Naive thymus-derived CD4-positive, alpha-beta T cell (primary cell): ENCODE measurements at regions of chr1 and their contacts with region 1.

Region 1: DNA sequence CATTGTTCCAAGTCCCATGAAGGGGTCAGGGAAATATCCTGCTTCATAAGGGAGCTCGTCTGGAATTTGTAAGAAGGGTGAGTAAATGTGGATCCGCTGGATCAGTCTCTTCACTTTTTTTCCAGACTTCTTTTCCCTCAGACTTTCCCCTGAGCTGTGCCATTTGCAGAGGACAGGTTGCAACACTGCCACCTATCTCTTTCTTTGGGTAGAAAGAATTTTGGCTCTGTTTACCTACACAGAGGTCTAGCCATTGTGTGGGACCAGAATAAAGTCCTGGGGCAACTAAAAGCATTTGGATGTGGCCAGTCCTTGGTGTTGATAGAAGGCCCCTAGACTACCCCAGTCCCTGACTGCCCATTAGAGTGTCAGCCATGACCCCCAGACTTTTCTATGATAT is 1146.7 kb upstream of the PRMT6 start:
- DNase-seq: no peak
- ATAC-seq: no peak
- H3K4me3 ChIP-seq: no peak overlapping the region
- H3K4me3 Mint-ChIP-seq: no peak overlapping the region
- H3K27ac ChIP-seq: no peak overlapping the region
- H3K27ac Mint-ChIP-seq: no peak overlapping the region
- H3K4me1 ChIP-seq: no peaks in the 10 kb centered on the region
- H3K4me1 Mint-ChIP-seq: no peaks in the 10 kb centered on the region
- H3K27me3 ChIP-seq: no peaks in the 10 kb centered on the region
- H3K27me3 Mint-ChIP-seq: no peaks in the 10 kb centered on the region

Region 2: DNA sequence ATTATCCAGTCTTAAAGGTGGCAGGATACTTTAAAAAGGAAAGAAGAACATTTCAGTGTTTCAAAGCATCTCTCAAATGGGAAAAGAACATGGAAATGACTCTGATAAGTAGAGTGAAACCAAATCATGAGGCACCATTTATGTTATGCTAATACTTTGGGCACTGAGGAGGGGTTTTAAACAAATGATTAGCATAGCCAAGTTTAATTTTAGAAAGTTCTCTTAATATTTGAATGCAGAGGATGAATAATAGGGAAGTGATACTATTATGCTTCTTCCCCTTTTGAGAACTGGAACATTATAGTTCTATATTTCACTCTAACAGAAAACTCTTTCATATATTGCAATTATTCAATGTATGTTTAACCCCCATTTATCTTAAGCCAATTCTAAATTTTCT is 35.2 kb before region 1 on chr1:
- CTCF ChIA-PET with region 1: interaction called, 4 read pairs
- POLR2A ChIA-PET with region 1: no interaction called
- intact Hi-C with region 1: loop called in 1 of 2 experiments (anchors 1 kb)
- DNase-seq: no peak
- ATAC-seq: no peak
- H3K4me3 ChIP-seq: no peak overlapping the region
- H3K4me3 Mint-ChIP-seq: no peak overlapping the region
- H3K27ac ChIP-seq: no peak overlapping the region
- H3K27ac Mint-ChIP-seq: no peak overlapping the region
- H3K4me1 ChIP-seq: no peaks in the 10 kb centered on the region
- H3K4me1 Mint-ChIP-seq: no peaks in the 10 kb centered on the region
- H3K27me3 ChIP-seq: no peaks in the 10 kb centered on the region
- H3K27me3 Mint-ChIP-seq: no peaks in the 10 kb centered on the region

Region 3: DNA sequence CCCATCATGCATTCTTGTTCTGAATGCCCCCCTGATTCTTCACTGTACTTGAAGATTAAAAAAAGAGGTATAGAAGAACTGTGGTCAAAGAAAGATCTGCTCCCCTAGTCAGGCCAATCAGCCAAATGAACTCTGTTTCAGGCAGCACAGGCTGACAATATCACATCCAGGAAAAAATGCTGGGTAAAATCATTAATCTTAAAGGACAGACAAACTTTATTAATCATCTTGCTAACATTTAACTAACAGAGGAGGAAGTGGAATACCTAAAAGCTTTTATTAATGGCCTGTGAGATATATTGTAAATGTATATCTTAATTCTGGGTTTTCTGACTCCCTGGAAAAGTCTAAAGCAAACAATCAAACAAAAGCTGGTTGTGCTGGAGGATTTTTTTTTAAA is 486.2 kb after region 1 on chr1:
- CTCF ChIA-PET with region 1: no interaction called
- POLR2A ChIA-PET with region 1: no interaction called
- intact Hi-C with region 1: no loop called
- DNase-seq: no peak
- ATAC-seq: no peak
- H3K4me3 ChIP-seq: no peak overlapping the region
- H3K4me3 Mint-ChIP-seq: no peak overlapping the region
- H3K27ac ChIP-seq: no peak overlapping the region
- H3K27ac Mint-ChIP-seq: no peak overlapping the region
- H3K4me1 ChIP-seq: no peaks in the 10 kb centered on the region
- H3K4me1 Mint-ChIP-seq: no peaks in the 10 kb centered on the region
- H3K27me3 ChIP-seq: no peaks in the 10 kb centered on the region
- H3K27me3 Mint-ChIP-seq: no peaks in the 10 kb centered on the region

Region 4: GRCh38 chr1:106473937-106474336 is 564.1 kb after region 1 on chr1:
- CTCF ChIA-PET with region 1: no interaction called
- POLR2A ChIA-PET with region 1: no interaction called
- intact Hi-C with region 1: no loop called
- DNase-seq: no peak
- ATAC-seq: no peak
- H3K4me3 ChIP-seq: no peak overlapping the region
- H3K4me3 Mint-ChIP-seq: no peak overlapping the region
- H3K27ac ChIP-seq: no peak overlapping the region
- H3K27ac Mint-ChIP-seq: no peak overlapping the region
- H3K4me1 ChIP-seq: no peaks in the 10 kb centered on the region
- H3K4me1 Mint-ChIP-seq: no peaks in the 10 kb centered on the region
- H3K27me3 ChIP-seq: no peaks in the 10 kb centered on the region
- H3K27me3 Mint-ChIP-seq: no peaks in the 10 kb centered on the region